Motor neuron (in vitro differentiated cells): ENCODE measurements at regions of chr12 and their contacts with region 1.

Region 1: GRCh38 chr12:106136263-106136662 is 2.5 kb downstream of the NUAK1 start:
- ATAC-seq: peak in 4 of 8 experiments; percentile 4 to 6 (median 6)
- H3K4me3 ChIP-seq: peak overlapping the region; percentile 77 to 89 (median 81)
- H3K27ac ChIP-seq: peak overlapping the region in 1 of 2 donors; percentile 14
- H3K4me1 ChIP-seq: peaks cover 38 to 40% of the 10 kb centered on the region in 2 donors

Region 2: GRCh38 chr12:105289114-105289904 is 847.0 kb before region 1 on chr12:
- in situ Hi-C with region 1: no loop called
- ATAC-seq: peak in 1 of 8 experiments; percentile 44
- H3K4me3 ChIP-seq: no peak overlapping the region
- H3K27ac ChIP-seq: no peak overlapping the region
- H3K4me1 ChIP-seq: no peaks in the 10 kb centered on the region

Region 3: GRCh38 chr12:105409801-105410471 is 726.3 kb before region 1 on chr12:
- in situ Hi-C with region 1: loop called in 6 of 9 experiments (anchors 10 to 25 kb)
- ATAC-seq: peak in 4 of 8 experiments; percentile 47 to 82 (median 78)
- H3K4me3 ChIP-seq: no peak overlapping the region
- H3K27ac ChIP-seq: peak overlapping the region in 1 of 2 donors; percentile 45
- H3K4me1 ChIP-seq: peaks cover 6 to 7% of the 10 kb centered on the region in 2 donors

Region 4: GRCh38 chr12:105420659-105421240 is 715.5 kb before region 1 on chr12:
- in situ Hi-C with region 1: loop called in 7 of 9 experiments (anchors 10 to 25 kb)
- ATAC-seq: peak; percentile 28 to 87 (median 78)
- H3K4me3 ChIP-seq: no peak overlapping the region
- H3K27ac ChIP-seq: no peak overlapping the region
- H3K4me1 ChIP-seq: no peaks in the 10 kb centered on the region

Region 5: DNA sequence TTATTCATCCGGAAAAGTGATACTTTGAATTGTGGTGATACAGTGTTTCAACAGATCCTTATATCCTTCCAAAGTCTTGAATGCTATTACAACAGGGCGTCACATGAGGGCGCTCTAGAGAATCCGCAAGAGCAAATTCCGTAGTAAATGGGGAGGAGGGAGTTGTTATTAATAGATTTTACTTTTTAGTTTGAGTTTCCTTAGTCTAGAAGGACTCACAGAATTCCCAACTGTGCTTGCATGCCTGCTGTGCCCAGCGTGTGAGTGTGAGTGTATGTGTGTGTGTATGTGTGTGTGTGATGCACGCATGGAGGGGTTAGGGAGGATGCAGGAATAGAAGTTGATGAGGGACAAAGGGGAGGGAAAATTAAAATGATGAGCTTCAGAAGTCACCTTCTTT is 430.5 kb before region 1 on chr12:
- in situ Hi-C with region 1: loop called in 4 of 9 experiments (anchors 25 kb)
- ATAC-seq: peak; percentile 6 to 64 (median 35)
- H3K4me3 ChIP-seq: no peak overlapping the region
- H3K27ac ChIP-seq: no peak overlapping the region
- H3K4me1 ChIP-seq: peaks cover 14 to 17% of the 10 kb centered on the region in 2 donors

Region 6: DNA sequence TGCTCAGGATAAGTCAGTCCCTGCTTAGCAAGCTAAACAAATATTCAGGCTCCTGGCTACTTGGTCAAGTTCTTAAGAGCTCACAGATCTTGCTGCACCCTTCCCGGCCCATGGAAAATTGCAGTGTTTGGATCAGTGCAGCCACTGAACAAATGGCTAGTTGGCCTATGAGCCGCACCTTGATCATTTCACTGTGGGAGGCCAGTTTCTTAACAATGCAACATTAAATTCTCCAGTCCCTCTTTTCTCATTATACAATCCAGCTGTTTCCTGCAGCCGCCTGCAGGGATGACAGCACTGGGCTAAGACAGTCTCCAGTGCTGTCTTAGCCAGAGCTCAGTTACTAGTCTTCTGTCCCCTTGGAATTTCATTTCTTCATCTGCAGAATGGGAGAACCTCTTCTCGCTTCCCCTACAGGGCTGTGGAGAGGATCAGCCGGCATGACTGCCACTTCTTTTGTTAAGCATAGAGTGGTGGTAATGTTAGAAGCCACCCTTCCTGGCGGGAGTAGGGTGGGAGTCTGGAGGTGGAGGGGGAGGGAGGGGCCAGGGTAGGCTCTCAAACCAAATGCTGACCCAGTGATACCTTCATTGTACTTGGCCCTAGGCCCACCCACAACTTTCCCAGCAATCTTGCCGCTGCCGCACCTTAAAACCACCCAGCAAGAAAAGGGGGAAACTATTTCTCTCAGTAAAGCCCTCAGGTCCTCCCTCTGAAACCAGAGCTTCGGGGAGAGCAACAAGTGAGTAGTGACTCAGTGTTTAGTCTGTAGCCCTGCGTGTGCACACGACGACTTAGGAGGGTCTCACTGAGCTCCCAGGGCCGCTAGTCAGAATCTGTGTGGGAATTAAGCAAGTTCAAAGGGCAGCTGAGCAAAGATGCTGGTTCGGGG is 143.2 kb before region 1 on chr12:
- in situ Hi-C with region 1: no loop called
- ATAC-seq: peak in 2 of 8 experiments; percentile 54 to 71
- H3K4me3 ChIP-seq: no peak overlapping the region
- H3K27ac ChIP-seq: no peak overlapping the region
- H3K4me1 ChIP-seq: no peaks in the 10 kb centered on the region

Region 7: DNA sequence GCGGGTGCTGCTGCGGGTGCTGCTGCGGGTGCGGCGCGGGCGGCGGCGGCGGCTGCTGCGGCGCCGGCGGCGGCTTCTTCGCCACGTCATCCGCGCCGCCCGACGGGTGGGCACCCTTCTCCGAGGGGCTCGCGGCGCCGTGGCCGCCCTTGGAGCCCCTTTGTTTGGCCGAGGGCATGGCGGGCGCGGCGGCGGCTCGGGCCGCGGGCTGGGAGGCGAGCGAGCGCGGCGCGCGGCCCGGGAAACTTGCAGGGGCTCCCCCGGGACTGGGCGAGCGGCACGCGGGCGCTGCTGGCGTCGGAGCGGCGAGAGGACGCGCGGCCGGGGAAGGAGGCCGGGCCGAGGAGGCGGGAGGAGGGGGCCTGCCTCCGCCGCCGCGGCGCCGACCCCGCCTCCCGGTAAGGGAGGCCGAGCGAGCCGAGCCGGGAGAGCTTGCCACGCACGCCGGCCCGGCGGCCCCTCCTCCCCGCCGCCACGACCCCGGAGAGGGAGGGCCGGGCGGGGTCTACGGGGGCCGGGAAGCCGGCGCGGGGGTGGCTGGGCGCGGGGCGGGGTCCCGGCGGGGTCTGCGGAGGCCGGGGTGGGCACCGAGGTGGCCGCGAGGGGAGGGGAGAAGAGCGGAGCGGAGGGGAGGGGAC is 111.5 kb after region 1 on chr12 and contains the start of gene CKAP4:
- in situ Hi-C with region 1: no loop called
- ATAC-seq: peak; percentile 20 to 87 (median 82)
- H3K4me3 ChIP-seq: peak within 1 kb of the TSS; percentile 56 to 98 (median 80)
- H3K27ac ChIP-seq: peak within 1 kb of the TSS; percentile 95 to 96
- H3K4me1 ChIP-seq: peaks cover 24 to 25% of the 10 kb centered on the region in 2 donors
- total RNA-seq, gene CKAP4: 38.0 to 132 (median 50.4) TPM

Region 8: DNA sequence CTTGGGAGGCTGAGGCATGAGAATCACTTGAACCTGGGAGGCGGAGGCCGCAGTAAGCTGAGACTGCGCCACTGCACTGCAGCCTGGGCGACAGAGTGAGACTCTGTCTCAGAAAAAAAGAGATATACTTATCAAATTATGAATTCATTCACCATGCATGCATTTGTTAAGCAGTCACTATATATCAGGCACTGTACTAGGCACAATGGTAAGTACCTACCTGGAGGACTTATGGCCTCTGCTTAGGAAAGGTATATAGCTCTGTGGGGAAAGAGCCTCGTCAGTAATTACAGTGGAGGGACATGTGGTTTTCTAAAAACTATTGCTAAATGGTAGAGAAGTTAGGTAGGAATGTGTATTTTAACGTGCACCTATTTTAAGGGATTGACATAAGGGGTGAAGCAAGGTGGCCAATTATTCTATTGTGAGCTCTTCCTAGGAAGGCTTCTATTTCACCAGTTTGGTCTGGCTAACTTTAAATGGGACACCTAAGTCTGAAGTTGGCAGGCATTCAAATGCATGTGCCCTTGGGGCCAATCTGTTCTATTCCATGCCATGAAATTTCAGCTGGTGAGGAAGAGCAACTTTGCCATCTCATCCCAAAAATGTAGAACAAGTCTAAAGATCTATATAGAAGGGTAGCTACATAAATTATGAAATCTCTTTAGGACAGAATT is 181.3 kb after region 1 on chr12:
- in situ Hi-C with region 1: no loop called
- ATAC-seq: peak in 1 of 8 experiments; percentile 52
- H3K4me3 ChIP-seq: no peak overlapping the region
- H3K27ac ChIP-seq: no peak overlapping the region
- H3K4me1 ChIP-seq: no peaks in the 10 kb centered on the region